ENCODE measurements at regions of chr1 and their contacts with region 1.

Region 1: DNA sequence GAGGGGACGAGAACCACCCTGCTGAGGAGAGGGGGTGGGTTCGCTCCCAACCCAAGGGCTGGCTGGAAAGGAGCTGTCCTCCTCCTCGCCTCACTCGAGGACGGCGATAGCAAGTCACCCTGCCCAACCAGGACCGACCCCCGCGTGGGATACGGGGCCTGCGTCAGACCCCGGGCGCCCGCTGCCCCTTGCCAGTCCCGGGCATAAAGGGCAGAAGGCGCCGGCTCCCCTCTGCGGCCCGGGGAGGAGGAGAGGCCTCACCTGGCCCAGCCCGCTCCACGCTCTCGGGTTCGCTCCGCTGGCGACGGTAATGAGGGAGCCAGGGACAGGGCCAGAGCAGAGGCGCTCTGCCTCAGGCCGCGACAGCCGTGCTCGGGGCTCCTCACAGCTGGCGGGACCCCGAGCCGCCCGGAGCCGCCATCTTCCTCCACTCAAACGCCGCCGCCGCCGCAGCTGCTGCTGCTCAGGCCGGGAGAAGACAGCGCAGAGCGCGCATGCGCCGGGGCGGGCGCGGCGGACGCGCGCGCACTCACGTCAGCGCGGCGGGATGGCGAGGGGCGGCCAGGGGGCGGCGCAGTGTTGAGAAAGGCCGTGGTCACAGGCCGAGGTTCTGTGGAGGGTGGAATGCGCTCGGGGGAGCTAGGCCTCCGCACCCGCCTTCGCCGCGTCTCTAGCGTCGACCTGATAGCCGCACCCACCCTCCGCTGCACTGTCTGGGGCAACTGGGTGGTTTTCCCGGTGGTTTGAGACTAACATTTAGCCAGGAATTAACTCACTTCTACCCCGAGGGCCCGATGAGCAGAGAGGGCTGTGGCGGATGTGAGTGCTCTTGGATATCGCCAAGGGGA is at the start of gene FBXO42:
- DNase-seq: peak; percentile 89 to 91
- H3K4me3 ChIP-seq: peak within 1 kb of the TSS; percentile 50 to 73 (median 72)
- H3K27ac ChIP-seq: peak within 1 kb of the TSS; percentile 91 to 96 (median 96)
- H3K4me1 ChIP-seq: peaks cover 14 to 25% of the 10 kb centered on the region in 2 donors
- H3K27me3 ChIP-seq: no peaks in the 10 kb centered on the region
- CTCF ChIP-seq: peak in 4 of 6 experiments; percentile 12 to 48 (median 42)
- POLR2A ChIP-seq: peak; percentile 71 to 98
- total RNA-seq, gene FBXO42: 24.3 to 41.9 (median 31.9) TPM

Region 2: DNA sequence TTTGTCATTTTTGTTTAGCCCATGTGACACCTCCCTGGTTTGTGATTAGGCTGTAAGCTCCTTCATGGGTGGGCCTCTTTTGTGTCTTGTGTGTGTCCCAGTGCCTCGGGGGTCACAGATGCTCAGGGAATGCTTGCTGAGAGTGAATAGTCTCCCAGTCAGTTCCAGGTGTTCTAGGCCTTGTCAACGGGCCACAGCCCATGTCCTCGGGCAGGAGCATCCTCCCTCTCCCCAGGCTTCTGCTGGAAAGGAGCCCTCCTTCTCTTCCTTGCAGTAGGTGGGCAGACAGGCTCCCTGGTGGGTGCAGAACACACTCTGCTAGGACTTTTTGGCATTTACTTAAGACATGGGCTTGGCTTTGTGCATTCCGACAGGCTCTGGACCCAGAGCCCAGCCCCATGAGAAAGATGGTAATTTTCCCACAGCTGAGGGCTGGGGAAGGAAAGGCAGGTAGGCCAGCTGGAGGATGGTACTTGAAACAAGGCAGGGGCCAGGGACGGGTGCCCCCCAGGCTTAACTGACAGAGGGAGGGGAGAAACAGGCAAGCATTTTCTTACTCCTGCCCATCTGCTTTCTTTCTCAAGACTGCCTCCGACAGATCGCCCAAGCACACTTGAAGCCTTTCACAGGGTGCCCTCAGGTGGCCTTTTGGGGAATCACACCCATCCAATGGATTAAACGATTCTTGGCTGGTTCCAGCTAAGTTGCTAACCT is 108.1 kb before region 1 on chr1:
- intact Hi-C with region 1: loop called (anchors 10 kb)
- DNase-seq: peak; percentile 83 to 87
- H3K4me3 ChIP-seq: no peak overlapping the region
- H3K27ac ChIP-seq: peak overlapping the region in 1 of 3 donors; percentile 45
- H3K4me1 ChIP-seq: peaks cover 15 to 26% of the 10 kb centered on the region in 2 donors
- H3K27me3 ChIP-seq: no peaks in the 10 kb centered on the region
- CTCF ChIP-seq: peak; percentile 56 to 93 (median 86)
- POLR2A ChIP-seq: no peak

Region 3: GRCh38 chr1:16385659-16386453 is 33.6 kb after region 1 on chr1:
- intact Hi-C with region 1: no loop called
- DNase-seq: no peak
- H3K4me3 ChIP-seq: no peak overlapping the region
- H3K27ac ChIP-seq: peak overlapping the region; percentile 73 to 83 (median 82)
- H3K4me1 ChIP-seq: peaks cover 33 to 39% of the 10 kb centered on the region in 2 donors
- H3K27me3 ChIP-seq: no peaks in the 10 kb centered on the region
- CTCF ChIP-seq: no peak
- POLR2A ChIP-seq: no peak

Region 4: DNA sequence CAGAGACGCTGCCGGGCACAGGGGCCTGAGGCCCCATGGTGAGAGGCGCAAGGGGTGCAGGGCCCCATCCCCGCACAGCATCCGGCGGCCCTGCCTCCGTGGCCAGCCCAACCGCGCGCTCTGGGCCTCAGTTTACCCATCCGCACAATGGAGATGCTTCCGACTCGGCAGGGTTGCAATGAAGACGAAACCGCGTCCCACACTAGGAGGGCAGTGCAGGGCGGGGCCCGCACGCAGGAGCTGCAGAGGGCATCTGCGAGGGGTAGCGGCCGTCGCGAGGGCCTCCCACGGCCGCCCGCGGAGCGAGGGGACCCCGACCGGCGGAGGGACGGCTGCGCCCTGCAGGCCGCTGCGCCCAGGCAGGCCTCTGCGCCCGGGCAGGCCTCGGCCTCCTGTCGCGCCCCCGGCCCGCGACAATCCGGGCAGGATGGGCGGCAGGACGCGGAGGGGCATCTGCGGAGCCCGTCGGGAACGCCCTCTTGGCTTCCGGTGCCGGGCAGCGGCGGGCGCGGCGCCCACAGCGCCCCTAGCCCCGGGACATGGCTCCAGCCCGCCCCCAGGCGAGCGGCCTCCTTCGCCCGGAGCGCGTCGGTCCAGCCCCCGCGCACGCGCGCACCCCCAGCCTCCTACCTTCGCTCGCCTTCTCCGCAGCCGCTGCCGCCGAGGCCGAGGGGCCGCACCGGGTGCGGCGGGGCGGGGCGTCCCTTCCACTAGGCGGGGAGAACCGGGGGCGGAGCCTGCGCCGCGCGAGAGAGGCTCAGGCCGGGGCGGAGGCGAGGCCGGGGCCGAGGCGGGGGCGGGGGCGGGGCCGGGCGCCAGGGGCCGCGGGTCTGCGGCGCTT is 146.6 kb after region 1 on chr1:
- intact Hi-C with region 1: no loop called
- DNase-seq: peak; percentile 90 to 92
- H3K4me3 ChIP-seq: peak overlapping the region; percentile 79 to 87 (median 81)
- H3K27ac ChIP-seq: peak overlapping the region; percentile 49 to 80 (median 74)
- H3K4me1 ChIP-seq: peaks cover 3 to 5% of the 10 kb centered on the region in 2 donors
- H3K27me3 ChIP-seq: no peaks in the 10 kb centered on the region
- CTCF ChIP-seq: peak in 1 of 6 experiments; percentile 18
- POLR2A ChIP-seq: peak in 1 of 2 donors; percentile 78

Measured in thyroid gland (tissue), 4 donors.